ENCODE measurements at regions of chr3 and their contacts with region 1.

Region 1: GRCh38 chr3:69691860-69692259 is 47.4 kb upstream of the MITF start:
- DNase-seq: no peak
- H3K4me3 ChIP-seq: no peak overlapping the region
- H3K27ac ChIP-seq: no peak overlapping the region
- H3K4me1 ChIP-seq: no peaks in the 10 kb centered on the region
- H3K27me3 ChIP-seq: no peaks in the 10 kb centered on the region
- CTCF ChIP-seq: no peak

Region 2: DNA sequence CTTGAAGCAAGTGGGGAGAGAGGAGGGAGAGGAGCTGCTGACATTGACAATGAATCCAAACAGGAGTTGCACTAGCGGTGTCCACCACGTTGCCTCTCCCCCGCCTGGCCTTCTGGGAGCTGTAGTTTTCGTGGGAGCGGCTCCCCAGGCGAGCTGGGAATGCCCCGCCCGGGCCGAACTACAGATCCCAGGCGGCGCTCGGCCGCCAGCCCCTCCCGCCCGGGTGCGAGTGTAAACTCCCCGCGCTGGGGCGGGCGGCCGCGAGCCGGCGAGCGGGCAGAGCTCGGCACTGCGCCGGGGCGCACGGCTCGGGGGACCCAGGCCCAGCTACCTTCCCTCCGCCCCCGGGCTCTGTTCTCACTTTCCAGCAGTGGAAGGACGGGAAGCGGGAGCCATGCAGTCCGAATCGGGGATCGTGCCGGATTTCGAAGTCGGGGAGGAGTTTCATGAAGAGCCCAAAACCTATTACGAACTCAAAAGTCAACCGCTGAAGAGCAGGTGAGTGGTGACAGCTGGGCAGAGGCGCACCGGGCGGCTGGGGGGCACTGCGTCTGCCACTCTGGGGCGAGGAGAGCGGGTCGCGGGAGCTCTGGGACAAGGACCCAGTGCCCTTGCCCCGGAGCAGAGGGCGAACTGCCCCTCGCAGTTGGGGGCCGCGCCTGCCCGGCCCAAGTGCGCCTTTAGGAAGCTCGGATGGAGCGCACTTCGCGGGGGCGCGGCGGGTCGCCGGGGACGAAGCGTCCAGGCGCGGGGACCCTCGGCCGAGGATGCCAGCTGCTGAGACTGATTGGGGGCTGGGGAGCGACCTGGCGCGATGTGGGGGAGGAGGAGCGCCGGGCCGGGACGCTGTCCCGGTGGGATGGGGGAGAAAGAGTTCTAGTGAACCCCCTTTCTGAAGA is 47.6 kb after region 1 on chr3 and contains the start of gene MITF:
- CTCF ChIA-PET with region 1: interaction called, 3 read pairs
- dilution Hi-C with region 1: no loop called
- in situ Hi-C with region 1: no loop called
- intact Hi-C with region 1: loop called (anchors 5 kb)
- DNase-seq: peak; percentile 90
- H3K4me3 ChIP-seq: peak within 1 kb of the TSS; percentile 85 to 98 (median 85)
- H3K27ac ChIP-seq: no peak within 1 kb of the TSS
- H3K4me1 ChIP-seq: peaks cover 10% of the 10 kb centered on the region
- H3K27me3 ChIP-seq: no peaks in the 10 kb centered on the region
- CTCF ChIP-seq: peak in 1 of 2 donors; percentile 0
- total RNA-seq, gene MITF: 5.7 to 8.3 TPM

Region 3: DNA sequence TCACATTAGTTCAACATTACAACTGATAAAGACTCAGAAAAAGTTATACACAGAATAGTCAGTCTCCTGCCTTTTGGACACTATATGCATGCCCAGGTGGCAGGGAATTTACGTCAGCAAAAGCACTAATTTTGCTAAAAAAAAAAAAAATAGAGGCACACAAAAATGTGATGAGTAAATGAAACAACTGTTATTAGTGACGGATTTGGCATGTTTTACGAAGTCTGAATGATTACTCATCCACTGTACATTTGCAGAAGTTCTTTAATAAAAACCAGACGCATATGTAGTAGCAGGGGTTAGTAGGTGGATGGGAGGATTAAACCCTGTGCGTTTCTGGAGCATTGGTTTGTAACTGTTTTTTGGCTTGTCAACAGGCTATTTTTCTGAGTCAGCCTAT is 146.4 kb after region 1 on chr3:
- CTCF ChIA-PET with region 1: no interaction called
- dilution Hi-C with region 1: no loop called
- in situ Hi-C with region 1: no loop called
- intact Hi-C with region 1: no loop called
- DNase-seq: peak; percentile 25
- H3K4me3 ChIP-seq: no peak overlapping the region
- H3K27ac ChIP-seq: no peak overlapping the region
- H3K4me1 ChIP-seq: no peaks in the 10 kb centered on the region
- H3K27me3 ChIP-seq: peaks cover 2% of the 10 kb centered on the region
- CTCF ChIP-seq: no peak

Region 4: GRCh38 chr3:69855436-69856162 is 163.7 kb after region 1 on chr3:
- CTCF ChIA-PET with region 1: interaction called, 6 read pairs
- dilution Hi-C with region 1: no loop called
- in situ Hi-C with region 1: no loop called
- intact Hi-C with region 1: loop called (anchors 1 kb)
- DNase-seq: peak; percentile 23
- H3K4me3 ChIP-seq: no peak overlapping the region
- H3K27ac ChIP-seq: no peak overlapping the region
- H3K4me1 ChIP-seq: no peaks in the 10 kb centered on the region
- H3K27me3 ChIP-seq: peaks cover 2% of the 10 kb centered on the region
- CTCF ChIP-seq: peak; percentile 32 to 57

Region 5: DNA sequence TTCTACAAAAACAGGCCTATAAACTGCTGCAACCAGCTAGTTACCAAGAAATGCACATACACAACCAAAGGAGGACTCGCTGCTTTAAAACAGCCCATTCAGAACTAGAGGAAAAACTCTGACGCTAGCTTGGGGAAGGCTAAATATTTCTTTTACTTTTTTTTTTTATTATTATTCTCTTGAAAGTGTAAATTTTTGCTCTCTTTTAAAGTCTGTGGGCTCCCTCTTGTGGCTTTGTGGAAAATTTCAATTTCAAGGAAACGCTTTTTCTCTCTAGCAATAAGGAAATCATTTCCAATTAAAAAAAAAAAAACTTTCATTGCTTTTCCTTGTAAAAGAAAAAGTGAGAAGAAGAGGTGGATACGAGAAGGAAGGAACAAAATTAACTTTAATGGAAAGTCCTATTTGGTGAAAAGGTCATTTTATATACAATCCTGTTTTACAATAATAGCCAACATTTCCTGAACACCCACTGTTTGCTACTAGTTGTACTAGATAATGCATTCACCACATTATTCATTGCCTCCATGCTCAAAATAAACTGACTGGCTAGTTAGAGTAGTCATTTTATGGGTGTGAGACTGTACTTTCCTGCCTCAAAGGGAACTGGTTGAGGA is 256.5 kb after region 1 on chr3:
- CTCF ChIA-PET with region 1: no interaction called
- dilution Hi-C with region 1: loop called (anchors 25 kb)
- in situ Hi-C with region 1: loop called (anchors 10 kb)
- intact Hi-C with region 1: loop called (anchors 1 kb)
- DNase-seq: peak; percentile 9
- H3K4me3 ChIP-seq: no peak overlapping the region
- H3K27ac ChIP-seq: no peak overlapping the region
- H3K4me1 ChIP-seq: no peaks in the 10 kb centered on the region
- H3K27me3 ChIP-seq: no peaks in the 10 kb centered on the region
- CTCF ChIP-seq: peak; percentile 43 to 57